ENCODE measurements at regions of chr11 and their contacts with region 1.

Region 1: GRCh38 chr11:124953753-124954589 is at the start of gene CCDC15:
- DNase-seq: peak; percentile 78 to 94 (median 92)
- ATAC-seq: peak; percentile 99
- H3K4me3 ChIP-seq: peak within 1 kb of the TSS; percentile 72
- H3K4me3 Mint-ChIP-seq: no peak within 1 kb of the TSS
- H3K27ac ChIP-seq: peak within 1 kb of the TSS; percentile 85
- H3K27ac Mint-ChIP-seq: no peak within 1 kb of the TSS
- H3K4me1 ChIP-seq: peaks cover 27 to 42% of the 10 kb centered on the region in 2 donors
- H3K4me1 Mint-ChIP-seq: peaks cover 0 to 7% (median 0%) of the 10 kb centered on the region in 7 donors
- H3K27me3 ChIP-seq: no peaks in the 10 kb centered on the region
- H3K27me3 Mint-ChIP-seq: no peaks in the 10 kb centered on the region
- total RNA-seq, gene CCDC15: 1.6 to 4.7 (median 2.7) TPM

Region 2: GRCh38 chr11:124114942-124115781 is 838.8 kb before region 1 on chr11 and contains the start of gene VWA5A:
- CTCF ChIA-PET with region 1: no interaction called
- POLR2A ChIA-PET with region 1: no interaction called
- intact Hi-C with region 1: loop called in 1 of 2 experiments (anchors 5 kb)
- DNase-seq: peak; percentile 22 to 73 (median 59)
- ATAC-seq: peak; percentile 97
- H3K4me3 ChIP-seq: peak within 1 kb of the TSS; percentile 89
- H3K4me3 Mint-ChIP-seq: peak within 1 kb of the TSS; percentile 86 to 100 (median 90)
- H3K27ac ChIP-seq: peak within 1 kb of the TSS; percentile 41
- H3K27ac Mint-ChIP-seq: peak within 1 kb of the TSS; percentile 66 to 95 (median 83)
- H3K4me1 ChIP-seq: peaks cover 7 to 8% of the 10 kb centered on the region in 2 donors
- H3K4me1 Mint-ChIP-seq: peaks cover 13 to 37% (median 22%) of the 10 kb centered on the region in 7 donors
- H3K27me3 ChIP-seq: no peaks in the 10 kb centered on the region
- H3K27me3 Mint-ChIP-seq: peaks cover 0 to 15% (median 12%) of the 10 kb centered on the region in 5 donors
- total RNA-seq, gene VWA5A: 5.2 to 10.2 (median 8.3) TPM

Region 3: DNA sequence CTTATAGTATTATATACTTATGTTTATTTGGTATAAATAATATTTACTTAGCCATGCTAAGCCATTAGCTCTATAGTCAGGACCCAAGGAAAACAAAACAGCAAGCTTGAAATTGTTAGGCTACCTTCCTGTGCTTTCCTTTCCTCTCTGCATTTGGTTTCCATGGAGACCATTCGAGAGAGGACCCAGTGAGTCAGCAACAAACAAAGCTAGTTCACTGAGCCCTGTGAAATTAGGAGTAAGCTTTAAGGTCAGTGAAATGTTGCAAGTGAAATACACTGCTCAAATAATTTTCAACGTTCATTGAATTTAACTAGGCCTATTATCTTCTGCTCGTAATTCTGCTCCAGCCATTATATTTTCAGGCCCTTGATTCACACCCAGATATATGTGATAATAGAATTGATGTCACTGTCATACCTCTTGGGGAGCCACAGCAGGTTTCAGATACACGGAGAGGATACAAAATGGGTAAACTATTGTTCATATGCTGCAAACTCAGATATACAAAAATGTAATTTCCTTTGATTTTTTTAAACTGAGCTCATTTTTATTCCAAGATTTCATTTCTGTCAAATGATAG is 779.9 kb before region 1 on chr11:
- CTCF ChIA-PET with region 1: no interaction called
- POLR2A ChIA-PET with region 1: no interaction called
- intact Hi-C with region 1: no loop called
- DNase-seq: no peak
- ATAC-seq: no peak
- H3K4me3 ChIP-seq: no peak overlapping the region
- H3K4me3 Mint-ChIP-seq: no peak overlapping the region
- H3K27ac ChIP-seq: no peak overlapping the region
- H3K27ac Mint-ChIP-seq: no peak overlapping the region
- H3K4me1 ChIP-seq: no peaks in the 10 kb centered on the region
- H3K4me1 Mint-ChIP-seq: peaks cover 0 to 3% (median 0%) of the 10 kb centered on the region in 7 donors
- H3K27me3 ChIP-seq: no peaks in the 10 kb centered on the region
- H3K27me3 Mint-ChIP-seq: peaks cover 0 to 6% (median 0%) of the 10 kb centered on the region in 5 donors

Region 4: DNA sequence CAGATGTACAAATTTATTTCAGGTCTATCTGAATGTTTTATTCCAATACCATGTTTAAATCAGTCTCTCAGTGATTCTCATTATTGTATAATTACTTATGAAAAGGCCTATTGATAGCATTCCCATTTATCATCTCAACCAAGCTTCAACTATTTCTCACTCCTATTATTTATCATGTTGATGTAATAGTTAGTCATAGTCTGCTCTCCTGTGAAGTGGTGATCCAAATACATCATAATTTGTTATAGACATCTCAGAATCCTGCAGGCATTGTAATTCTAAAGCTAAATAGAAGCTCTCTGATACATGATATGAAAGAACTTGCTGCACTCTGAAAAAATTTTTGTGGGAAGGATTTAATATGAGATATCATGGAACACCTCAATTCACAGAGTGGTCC is 734.8 kb before region 1 on chr11:
- CTCF ChIA-PET with region 1: no interaction called
- POLR2A ChIA-PET with region 1: no interaction called
- intact Hi-C with region 1: no loop called
- DNase-seq: no peak
- ATAC-seq: no peak
- H3K4me3 ChIP-seq: no peak overlapping the region
- H3K4me3 Mint-ChIP-seq: no peak overlapping the region
- H3K27ac ChIP-seq: no peak overlapping the region
- H3K27ac Mint-ChIP-seq: no peak overlapping the region
- H3K4me1 ChIP-seq: no peaks in the 10 kb centered on the region
- H3K4me1 Mint-ChIP-seq: no peaks in the 10 kb centered on the region
- H3K27me3 ChIP-seq: no peaks in the 10 kb centered on the region
- H3K27me3 Mint-ChIP-seq: peaks cover 0 to 13% (median 6%) of the 10 kb centered on the region in 5 donors

Region 5: GRCh38 chr11:124746621-124747243 is 207.2 kb before region 1 on chr11:
- CTCF ChIA-PET with region 1: no interaction called
- POLR2A ChIA-PET with region 1: interaction called, 3 read pairs
- intact Hi-C with region 1: loop called (anchors 2 to 5 kb)
- DNase-seq: peak; percentile 66 to 88 (median 85)
- ATAC-seq: peak; percentile 93
- H3K4me3 ChIP-seq: peak overlapping the region; percentile 99
- H3K4me3 Mint-ChIP-seq: peak overlapping the region; percentile 91 to 100 (median 98)
- H3K27ac ChIP-seq: peak overlapping the region; percentile 72
- H3K27ac Mint-ChIP-seq: peak overlapping the region; percentile 91 to 98 (median 96)
- H3K4me1 ChIP-seq: peaks cover 0 to 3% of the 10 kb centered on the region in 2 donors
- H3K4me1 Mint-ChIP-seq: peaks cover 4 to 37% (median 19%) of the 10 kb centered on the region in 7 donors
- H3K27me3 ChIP-seq: no peaks in the 10 kb centered on the region
- H3K27me3 Mint-ChIP-seq: peaks cover 0 to 22% (median 0%) of the 10 kb centered on the region in 5 donors

Region 6: DNA sequence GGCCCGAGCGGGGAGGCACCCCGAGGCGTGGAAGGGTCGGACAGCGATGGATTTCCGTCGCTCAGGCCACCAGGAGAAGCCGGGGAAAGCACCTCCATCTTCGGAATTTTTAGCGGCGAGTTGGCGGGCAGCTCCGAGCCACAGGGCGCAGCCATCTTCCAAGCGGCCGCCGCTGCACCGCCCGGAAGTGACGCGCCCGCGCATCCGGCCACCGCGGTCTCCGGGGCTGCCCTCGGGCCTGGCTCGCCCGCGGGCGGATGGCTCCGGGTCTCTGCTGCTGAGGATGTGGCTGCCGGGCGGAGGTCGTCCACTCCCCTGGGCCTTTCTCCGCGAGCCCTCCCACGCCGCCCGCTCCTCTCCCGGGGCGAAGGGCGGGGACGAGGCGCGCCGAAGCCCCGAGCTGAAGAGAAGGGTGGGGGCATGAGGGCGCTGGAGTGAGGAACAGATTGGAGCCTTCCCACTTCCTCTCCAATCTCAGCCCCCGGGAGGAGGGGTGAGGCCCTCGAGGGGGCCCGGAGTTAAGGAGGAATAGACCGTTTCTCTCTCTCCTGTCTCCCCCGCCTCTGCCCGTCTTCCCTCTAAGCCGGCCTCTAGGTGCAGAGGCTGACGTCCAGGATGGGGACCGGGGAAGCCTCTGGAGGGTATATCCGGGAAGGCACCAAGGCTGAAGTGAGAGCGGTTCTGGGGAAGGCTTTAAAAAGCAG is 153.6 kb before region 1 on chr11 and contains the start of gene MSANTD2:
- CTCF ChIA-PET with region 1: no interaction called
- POLR2A ChIA-PET with region 1: interaction called, 4 read pairs
- intact Hi-C with region 1: loop called (anchors 1 to 2 kb)
- DNase-seq: peak; percentile 65 to 89 (median 73)
- ATAC-seq: peak; percentile 92
- H3K4me3 ChIP-seq: peak within 1 kb of the TSS; percentile 71
- H3K4me3 Mint-ChIP-seq: peak within 1 kb of the TSS; percentile 88 to 97 (median 96)
- H3K27ac ChIP-seq: peak within 1 kb of the TSS; percentile 93
- H3K27ac Mint-ChIP-seq: peak within 1 kb of the TSS; percentile 88 to 98 (median 94)
- H3K4me1 ChIP-seq: peaks cover 8 to 14% of the 10 kb centered on the region in 2 donors
- H3K4me1 Mint-ChIP-seq: peaks cover 13 to 38% (median 32%) of the 10 kb centered on the region in 7 donors
- H3K27me3 ChIP-seq: no peaks in the 10 kb centered on the region
- H3K27me3 Mint-ChIP-seq: peaks cover 0 to 24% (median 0%) of the 10 kb centered on the region in 5 donors
- total RNA-seq, gene MSANTD2: 9.1 to 29.5 (median 14.4) TPM

Region 7: DNA sequence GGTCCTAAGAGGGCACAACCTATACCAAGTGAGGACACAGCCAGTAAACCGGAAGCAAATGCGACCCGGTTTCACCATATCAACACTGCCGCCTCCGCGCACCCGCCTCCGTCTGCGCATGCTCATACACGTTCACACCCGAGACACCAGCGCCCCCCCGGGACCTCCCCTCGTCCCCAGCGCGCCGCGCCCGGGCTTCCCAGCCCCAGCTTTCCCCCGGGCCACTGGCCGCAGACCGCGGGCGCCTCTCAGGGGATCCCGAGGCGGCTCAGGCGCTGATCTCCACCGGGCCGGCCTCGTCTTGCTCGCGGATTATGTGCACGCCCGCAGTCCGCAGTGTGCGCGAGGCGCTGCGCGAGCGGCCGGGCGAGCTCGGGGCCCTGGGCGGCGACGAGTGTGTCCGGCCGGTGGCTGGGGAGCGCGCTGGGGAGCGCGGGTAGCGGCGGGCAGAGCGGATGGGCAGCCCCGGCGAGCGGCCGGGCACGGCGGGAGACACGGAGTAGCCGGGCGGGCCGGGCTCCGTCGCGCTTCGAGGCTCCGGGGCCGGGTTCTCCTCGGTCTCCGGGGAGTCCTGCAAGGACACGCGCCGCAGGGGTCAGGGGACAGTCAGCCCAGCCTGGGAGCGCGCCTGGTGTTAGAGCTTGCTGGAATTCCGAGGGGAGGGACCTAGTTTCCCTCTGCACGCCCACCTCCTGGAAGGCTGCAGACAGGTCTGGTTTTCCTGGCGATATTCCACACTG is 32.9 kb before region 1 on chr11:
- CTCF ChIA-PET with region 1: interaction called, 6 read pairs
- POLR2A ChIA-PET with region 1: interaction called, 45 read pairs
- intact Hi-C with region 1: loop called (anchors 1 to 2 kb)
- DNase-seq: peak; percentile 61 to 86 (median 78)
- ATAC-seq: peak; percentile 81
- H3K4me3 ChIP-seq: peak overlapping the region; percentile 46
- H3K4me3 Mint-ChIP-seq: peak overlapping the region; percentile 65 to 85 (median 80)
- H3K27ac ChIP-seq: peak overlapping the region; percentile 47
- H3K27ac Mint-ChIP-seq: peak overlapping the region in 8 of 9 donors; percentile 32 to 85 (median 62)
- H3K4me1 ChIP-seq: peaks cover 0 to 21% of the 10 kb centered on the region in 2 donors
- H3K4me1 Mint-ChIP-seq: peaks cover 8 to 46% (median 40%) of the 10 kb centered on the region in 7 donors
- H3K27me3 ChIP-seq: no peaks in the 10 kb centered on the region
- H3K27me3 Mint-ChIP-seq: peaks cover 0 to 12% (median 0%) of the 10 kb centered on the region in 5 donors

Region 8: GRCh38 chr11:125390946-125391345 is 437.0 kb after region 1 on chr11:
- CTCF ChIA-PET with region 1: no interaction called
- POLR2A ChIA-PET with region 1: no interaction called
- intact Hi-C with region 1: no loop called
- DNase-seq: no peak
- ATAC-seq: no peak
- H3K4me3 ChIP-seq: no peak overlapping the region
- H3K4me3 Mint-ChIP-seq: no peak overlapping the region
- H3K27ac ChIP-seq: no peak overlapping the region
- H3K27ac Mint-ChIP-seq: no peak overlapping the region
- H3K4me1 ChIP-seq: no peaks in the 10 kb centered on the region
- H3K4me1 Mint-ChIP-seq: no peaks in the 10 kb centered on the region
- H3K27me3 ChIP-seq: no peaks in the 10 kb centered on the region
- H3K27me3 Mint-ChIP-seq: peaks cover 13 to 37% (median 18%) of the 10 kb centered on the region in 5 donors

Region 9: GRCh38 chr11:125568970-125569914 is 615.3 kb after region 1 on chr11 and contains the start of gene EI24:
- CTCF ChIA-PET with region 1: no interaction called
- POLR2A ChIA-PET with region 1: interaction called, 3 read pairs
- intact Hi-C with region 1: loop called in 1 of 2 experiments (anchors 1 kb)
- DNase-seq: peak; percentile 73 to 89 (median 81)
- ATAC-seq: peak; percentile 99
- H3K4me3 ChIP-seq: peak within 1 kb of the TSS; percentile 90
- H3K4me3 Mint-ChIP-seq: peak within 1 kb of the TSS; percentile 90 to 97 (median 94)
- H3K27ac ChIP-seq: peak within 1 kb of the TSS; percentile 90
- H3K27ac Mint-ChIP-seq: peak within 1 kb of the TSS; percentile 78 to 96 (median 91)
- H3K4me1 ChIP-seq: peaks cover 13 to 16% of the 10 kb centered on the region in 2 donors
- H3K4me1 Mint-ChIP-seq: peaks cover 12 to 38% (median 26%) of the 10 kb centered on the region in 7 donors
- H3K27me3 ChIP-seq: no peaks in the 10 kb centered on the region
- H3K27me3 Mint-ChIP-seq: no peaks in the 10 kb centered on the region
- total RNA-seq, gene EI24: 21.3 to 42.7 (median 35.7) TPM

Region 10: GRCh38 chr11:125663910-125664309 is 709.9 kb after region 1 on chr11:
- CTCF ChIA-PET with region 1: no interaction called
- POLR2A ChIA-PET with region 1: no interaction called
- intact Hi-C with region 1: no loop called
- DNase-seq: no peak
- ATAC-seq: no peak
- H3K4me3 ChIP-seq: no peak overlapping the region
- H3K4me3 Mint-ChIP-seq: no peak overlapping the region
- H3K27ac ChIP-seq: no peak overlapping the region
- H3K27ac Mint-ChIP-seq: peak overlapping the region in 1 of 9 donors; percentile 1
- H3K4me1 ChIP-seq: no peaks in the 10 kb centered on the region
- H3K4me1 Mint-ChIP-seq: peaks cover 0 to 18% (median 0%) of the 10 kb centered on the region in 7 donors
- H3K27me3 ChIP-seq: no peaks in the 10 kb centered on the region
- H3K27me3 Mint-ChIP-seq: no peaks in the 10 kb centered on the region

Region 11: GRCh38 chr11:126062679-126063506 is 1108.9 kb after region 1 on chr11 and contains the start of gene CDON:
- CTCF ChIA-PET with region 1: no interaction called
- POLR2A ChIA-PET with region 1: no interaction called
- intact Hi-C with region 1: loop called (anchors 2 kb)
- DNase-seq: peak; percentile 88 to 97 (median 93)
- ATAC-seq: peak; percentile 92
- H3K4me3 ChIP-seq: peak within 1 kb of the TSS; percentile 83
- H3K4me3 Mint-ChIP-seq: peak within 1 kb of the TSS; percentile 79 to 93 (median 92)
- H3K27ac ChIP-seq: peak within 1 kb of the TSS; percentile 76
- H3K27ac Mint-ChIP-seq: peak within 1 kb of the TSS; percentile 79 to 98 (median 97)
- H3K4me1 ChIP-seq: peaks cover 4 to 5% of the 10 kb centered on the region in 2 donors
- H3K4me1 Mint-ChIP-seq: peaks cover 5 to 17% (median 7%) of the 10 kb centered on the region in 7 donors
- H3K27me3 ChIP-seq: no peaks in the 10 kb centered on the region
- H3K27me3 Mint-ChIP-seq: peaks cover 0 to 56% (median 5%) of the 10 kb centered on the region in 5 donors
- total RNA-seq, gene CDON: 1.5 to 4.8 (median 2.3) TPM

Measured in naive thymus-derived CD4-positive, alpha-beta T cell (primary cell).